Endothelial cell of umbilical vein (primary cell): ENCODE measurements at regions of chr17 and their contacts with region 1.

Region 1: GRCh38 chr17:28763804-28764266 is 20.0 kb downstream of the TRAF4 start:
- DNase-seq: peak; percentile 79
- H3K4me3 ChIP-seq: no peak overlapping the region
- H3K27ac ChIP-seq: no peak overlapping the region
- H3K4me1 ChIP-seq: peaks cover 16% of the 10 kb centered on the region
- H3K27me3 ChIP-seq: no peaks in the 10 kb centered on the region
- CTCF ChIP-seq: peak; percentile 66 to 75
- POLR2A ChIP-seq: no peak

Region 2: GRCh38 chr17:28726226-28727130 is 37.4 kb before region 1 on chr17 and contains the start of gene TLCD1:
- CTCF ChIA-PET with region 1: interaction called, 77 read pairs
- POLR2A ChIA-PET with region 1: interaction called, 4 read pairs
- dilution Hi-C with region 1: no loop called
- intact Hi-C with region 1: no loop called
- DNase-seq: peak; percentile 95
- H3K4me3 ChIP-seq: peak within 1 kb of the TSS; percentile 29 to 57 (median 41)
- H3K27ac ChIP-seq: peak within 1 kb of the TSS; percentile 10
- H3K4me1 ChIP-seq: peaks cover 38% of the 10 kb centered on the region
- H3K27me3 ChIP-seq: no peaks in the 10 kb centered on the region
- CTCF ChIP-seq: peak; percentile 98 to 99
- POLR2A ChIP-seq: no peak
- total RNA-seq, gene TLCD1: 1.8 and 2.6 TPM in 2 replicates

Region 3: GRCh38 chr17:28792877-28793661 is 29.2 kb after region 1 on chr17:
- CTCF ChIA-PET with region 1: interaction called, 30 read pairs
- POLR2A ChIA-PET with region 1: no interaction called
- dilution Hi-C with region 1: no loop called
- intact Hi-C with region 1: no loop called
- DNase-seq: peak; percentile 22
- H3K4me3 ChIP-seq: no peak overlapping the region
- H3K27ac ChIP-seq: no peak overlapping the region
- H3K4me1 ChIP-seq: peaks cover 3% of the 10 kb centered on the region
- H3K27me3 ChIP-seq: no peaks in the 10 kb centered on the region
- CTCF ChIP-seq: no peak
- POLR2A ChIP-seq: no peak

Region 4: GRCh38 chr17:28828294-28829040 is 64.6 kb after region 1 on chr17:
- CTCF ChIA-PET with region 1: interaction called, 21 read pairs
- POLR2A ChIA-PET with region 1: no interaction called
- dilution Hi-C with region 1: no loop called
- intact Hi-C with region 1: no loop called
- DNase-seq: no peak
- H3K4me3 ChIP-seq: no peak overlapping the region
- H3K27ac ChIP-seq: no peak overlapping the region
- H3K4me1 ChIP-seq: no peaks in the 10 kb centered on the region
- H3K27me3 ChIP-seq: no peaks in the 10 kb centered on the region
- CTCF ChIP-seq: no peak
- POLR2A ChIP-seq: no peak

Region 5: DNA sequence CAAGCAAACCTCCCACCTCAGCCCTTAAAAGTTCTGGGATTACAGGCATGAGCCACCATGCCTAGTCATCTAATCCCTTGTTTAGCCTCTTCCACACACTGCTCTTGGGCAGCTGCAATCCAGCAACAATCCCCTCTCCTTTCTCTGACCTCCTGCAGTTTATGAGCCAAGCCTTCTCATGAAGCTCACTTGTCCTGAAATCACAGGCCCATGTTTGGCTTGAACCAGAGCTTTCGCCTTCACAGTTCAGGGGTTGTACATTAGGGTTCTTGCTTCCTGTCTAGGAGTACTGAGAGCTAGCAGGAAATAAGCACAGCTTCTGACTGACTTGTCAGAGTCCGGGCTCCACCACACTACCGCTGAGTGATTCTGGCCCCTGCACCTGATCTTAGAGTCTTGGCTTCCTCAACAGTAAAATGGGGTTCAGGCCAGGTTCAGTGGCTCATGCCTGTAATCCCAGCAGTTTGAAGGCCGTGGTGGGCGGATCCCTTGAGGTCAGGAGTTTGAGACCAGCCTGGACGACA is 107.3 kb after region 1 on chr17:
- CTCF ChIA-PET with region 1: interaction called, 16 read pairs
- POLR2A ChIA-PET with region 1: no interaction called
- dilution Hi-C with region 1: no loop called
- intact Hi-C with region 1: no loop called
- DNase-seq: peak; percentile 27
- H3K4me3 ChIP-seq: no peak overlapping the region
- H3K27ac ChIP-seq: no peak overlapping the region
- H3K4me1 ChIP-seq: peaks cover 1% of the 10 kb centered on the region
- H3K27me3 ChIP-seq: no peaks in the 10 kb centered on the region
- CTCF ChIP-seq: no peak
- POLR2A ChIP-seq: no peak

Region 6: DNA sequence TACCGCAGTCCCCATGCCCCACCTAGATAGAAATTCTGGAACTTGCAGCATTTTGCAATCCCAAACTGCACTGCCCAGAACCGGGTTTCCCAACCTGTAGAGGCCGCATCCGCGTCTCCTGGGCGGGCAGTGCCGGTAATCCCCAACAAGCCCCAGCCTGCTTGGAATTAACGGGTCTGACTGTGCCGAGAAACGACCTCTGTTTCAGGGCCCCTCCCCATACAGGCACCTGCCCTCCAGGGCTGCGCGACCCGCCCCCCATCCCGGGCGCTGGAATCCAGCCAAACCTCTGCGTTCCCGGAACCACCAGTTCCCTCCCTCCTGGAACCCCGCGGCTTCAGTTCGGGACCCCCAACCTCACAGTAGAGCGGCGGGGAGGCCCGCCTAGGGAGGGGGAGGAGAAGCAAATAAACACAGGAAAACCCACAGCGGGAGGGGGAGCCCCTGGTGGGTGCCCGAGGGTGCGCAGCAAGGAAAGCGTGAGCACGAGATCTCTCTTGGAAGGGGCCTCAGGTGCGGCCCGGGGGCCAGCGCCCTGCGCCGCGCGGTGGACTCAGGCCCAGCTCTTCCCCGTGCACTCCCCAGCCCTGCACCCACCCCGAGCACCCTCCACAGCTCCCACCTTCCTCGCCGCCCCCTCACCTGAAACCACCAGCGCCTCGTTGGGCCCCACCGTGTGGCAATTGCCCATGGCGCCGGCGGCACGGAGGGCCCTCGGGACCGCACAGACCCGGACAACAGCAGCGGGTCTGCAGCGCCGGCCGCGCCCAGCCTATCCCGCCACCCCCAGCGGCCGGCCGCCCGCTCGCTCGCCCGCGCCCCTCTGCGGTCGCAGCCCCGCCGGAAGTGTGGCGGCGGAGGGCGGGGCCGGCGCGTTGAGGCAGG is 133.3 kb after region 1 on chr17 and contains the start of gene FLOT2:
- CTCF ChIA-PET with region 1: interaction called, 46 read pairs
- POLR2A ChIA-PET with region 1: no interaction called
- dilution Hi-C with region 1: no loop called
- intact Hi-C with region 1: no loop called
- DNase-seq: peak; percentile 22
- H3K4me3 ChIP-seq: peak within 1 kb of the TSS; percentile 63 to 85 (median 66)
- H3K27ac ChIP-seq: peak within 1 kb of the TSS; percentile 19
- H3K4me1 ChIP-seq: peaks cover 41% of the 10 kb centered on the region
- H3K27me3 ChIP-seq: no peaks in the 10 kb centered on the region
- CTCF ChIP-seq: peak; percentile 4 to 31
- POLR2A ChIP-seq: peak; percentile 80
- total RNA-seq, gene FLOT2: 131 and 169 TPM in 2 replicates

Region 7: DNA sequence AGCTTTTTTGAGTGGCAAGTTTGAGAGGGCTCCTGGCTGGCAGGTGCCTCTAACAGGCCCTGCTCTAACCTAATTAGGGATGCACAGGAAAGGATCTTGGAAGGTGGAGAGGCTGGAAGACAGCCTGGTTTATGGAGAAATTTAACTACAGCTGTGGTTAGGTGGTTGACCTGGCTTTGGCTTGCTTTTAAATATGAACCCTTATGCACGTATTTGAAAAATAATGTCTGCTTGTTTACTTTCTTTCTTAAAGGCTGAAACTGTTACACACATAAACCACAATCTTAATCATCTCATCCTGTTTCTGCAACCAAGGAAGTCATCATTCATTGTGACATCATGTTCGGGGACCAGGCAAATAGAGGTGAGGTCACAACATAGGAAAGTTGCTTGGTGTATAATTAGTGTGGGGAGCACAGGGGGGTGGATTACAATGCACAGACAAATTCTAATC is 162.1 kb after region 1 on chr17:
- CTCF ChIA-PET with region 1: interaction called, 10 read pairs
- POLR2A ChIA-PET with region 1: no interaction called
- dilution Hi-C with region 1: no loop called
- intact Hi-C with region 1: no loop called
- DNase-seq: peak; percentile 88
- H3K4me3 ChIP-seq: peak overlapping the region in 1 of 3 experiments; percentile 57
- H3K27ac ChIP-seq: peak overlapping the region; percentile 89
- H3K4me1 ChIP-seq: peaks cover 22% of the 10 kb centered on the region
- H3K27me3 ChIP-seq: no peaks in the 10 kb centered on the region
- CTCF ChIP-seq: no peak
- POLR2A ChIP-seq: no peak

Region 8: DNA sequence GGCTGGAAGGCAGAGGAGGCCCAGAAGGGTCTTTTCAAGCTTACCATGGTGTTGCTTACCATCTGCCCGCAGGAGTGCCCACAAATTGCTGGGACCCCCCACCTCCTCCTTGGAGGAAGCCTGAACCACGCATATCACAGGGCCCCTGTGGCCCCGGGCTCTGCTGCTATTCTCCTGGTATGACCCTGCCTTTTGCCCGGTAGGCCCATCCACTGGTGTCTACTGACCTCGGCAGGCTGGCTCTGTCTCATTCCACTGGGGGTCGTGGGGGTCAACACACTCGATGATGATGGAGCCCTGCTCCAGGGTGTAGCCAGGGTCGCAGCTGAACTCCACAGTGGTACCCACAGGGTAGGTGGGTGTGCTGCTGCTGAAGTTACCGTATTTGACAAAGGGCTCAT is 195.6 kb after region 1 on chr17:
- CTCF ChIA-PET with region 1: no interaction called
- POLR2A ChIA-PET with region 1: no interaction called
- dilution Hi-C with region 1: no loop called
- intact Hi-C with region 1: no loop called
- DNase-seq: no peak
- H3K4me3 ChIP-seq: no peak overlapping the region
- H3K27ac ChIP-seq: no peak overlapping the region
- H3K4me1 ChIP-seq: peaks cover 2% of the 10 kb centered on the region
- H3K27me3 ChIP-seq: no peaks in the 10 kb centered on the region
- CTCF ChIP-seq: no peak
- POLR2A ChIP-seq: no peak